Activated CD4-positive, alpha-beta memory T cell treated with anti-CD3 and anti-CD28 coated beads for 36 hours (primary cell): ENCODE measurements at regions of chr9 and their contacts with region 1.

Region 1: GRCh38 chr9:84261082-84261746 is 79.3 kb downstream of the SLC28A3 start:
- DNase-seq: peak; percentile 72
- H3K4me3 Mint-ChIP-seq: no peak overlapping the region
- H3K27ac Mint-ChIP-seq: no peak overlapping the region
- H3K4me1 Mint-ChIP-seq: peaks cover 7% of the 10 kb centered on the region
- H3K27me3 Mint-ChIP-seq: peaks cover 5% of the 10 kb centered on the region

Region 2: GRCh38 chr9:83937911-83938323 is 323.3 kb before region 1 on chr9:
- CTCF ChIA-PET with region 1: interaction called, 22 read pairs
- POLR2A ChIA-PET with region 1: interaction called, 4 read pairs
- intact Hi-C with region 1: loop called (anchors 1 kb)
- DNase-seq: peak; percentile 20
- H3K4me3 Mint-ChIP-seq: no peak overlapping the region
- H3K27ac Mint-ChIP-seq: no peak overlapping the region
- H3K4me1 Mint-ChIP-seq: no peaks in the 10 kb centered on the region
- H3K27me3 Mint-ChIP-seq: no peaks in the 10 kb centered on the region

Region 3: GRCh38 chr9:84271531-84271900 is 10.3 kb after region 1 on chr9:
- CTCF ChIA-PET with region 1: interaction called, 10 read pairs
- POLR2A ChIA-PET with region 1: interaction called, 3 read pairs
- intact Hi-C with region 1: no loop called
- DNase-seq: peak; percentile 70
- H3K4me3 Mint-ChIP-seq: peak overlapping the region; percentile 66
- H3K27ac Mint-ChIP-seq: no peak overlapping the region
- H3K4me1 Mint-ChIP-seq: peaks cover 10% of the 10 kb centered on the region
- H3K27me3 Mint-ChIP-seq: peaks cover 42% of the 10 kb centered on the region

Region 4: DNA sequence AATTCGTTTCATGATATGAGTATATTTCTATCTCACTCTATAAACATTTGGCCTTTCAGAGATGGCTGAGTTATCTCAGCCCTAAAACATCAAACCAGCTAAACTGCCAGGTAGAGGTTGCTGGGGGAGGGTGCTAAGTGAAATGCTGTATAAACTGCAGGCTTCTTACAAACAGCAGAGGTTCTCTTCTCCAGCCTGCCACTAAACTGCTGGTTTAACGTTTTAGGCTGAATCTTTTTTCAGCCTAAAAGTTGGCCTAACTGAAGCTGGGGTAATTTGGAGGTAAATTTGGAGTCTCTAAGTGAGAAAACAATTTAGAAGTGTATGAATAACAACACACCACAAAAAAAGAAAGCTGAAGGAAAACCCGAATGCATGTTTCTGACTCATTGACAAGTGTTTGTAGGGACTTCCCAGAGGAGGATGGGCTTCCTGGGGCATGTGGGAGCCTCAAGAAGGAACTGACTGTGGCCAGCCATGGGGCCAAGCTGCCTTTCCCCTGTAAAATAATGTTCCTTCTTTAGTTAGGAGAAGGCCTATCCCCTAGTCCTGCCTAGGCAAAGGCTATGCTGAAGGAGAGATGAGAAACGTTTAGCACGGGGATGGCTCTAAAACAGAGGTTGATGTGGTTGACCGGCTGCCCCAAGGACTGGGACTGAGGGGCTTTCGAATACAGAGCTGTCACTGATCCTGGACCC is 35.1 kb after region 1 on chr9:
- CTCF ChIA-PET with region 1: interaction called, 17 read pairs
- POLR2A ChIA-PET with region 1: interaction called, 4 read pairs
- intact Hi-C with region 1: loop called (anchors 1 kb)
- DNase-seq: peak; percentile 78
- H3K4me3 Mint-ChIP-seq: peak overlapping the region; percentile 49
- H3K27ac Mint-ChIP-seq: peak overlapping the region; percentile 98
- H3K4me1 Mint-ChIP-seq: peaks cover 58% of the 10 kb centered on the region
- H3K27me3 Mint-ChIP-seq: no peaks in the 10 kb centered on the region

Region 5: GRCh38 chr9:85040821-85041465 is 779.7 kb after region 1 on chr9:
- CTCF ChIA-PET with region 1: no interaction called
- POLR2A ChIA-PET with region 1: no interaction called
- intact Hi-C with region 1: no loop called
- DNase-seq: no peak
- H3K4me3 Mint-ChIP-seq: no peak overlapping the region
- H3K27ac Mint-ChIP-seq: no peak overlapping the region
- H3K4me1 Mint-ChIP-seq: no peaks in the 10 kb centered on the region
- H3K27me3 Mint-ChIP-seq: peaks cover 4% of the 10 kb centered on the region